GM12878 (cell line): ENCODE measurements at regions of chr17 and their contacts with region 1.

Region 1: GRCh38 chr17:50872710-50873424 is 6.7 kb upstream of the TOB1 start:
- DNase-seq: no peak
- ATAC-seq: peak; percentile 72
- H3K4me3 ChIP-seq: no peak overlapping the region
- H3K27ac ChIP-seq: no peak overlapping the region
- H3K4me1 ChIP-seq: peaks cover 13% of the 10 kb centered on the region
- H3K27me3 ChIP-seq: no peaks in the 10 kb centered on the region
- CTCF ChIP-seq: no peak
- EP300 ChIP-seq: no peak
- POLR2A ChIP-seq: no peak
- RAD21 ChIP-seq: no peak

Region 2: DNA sequence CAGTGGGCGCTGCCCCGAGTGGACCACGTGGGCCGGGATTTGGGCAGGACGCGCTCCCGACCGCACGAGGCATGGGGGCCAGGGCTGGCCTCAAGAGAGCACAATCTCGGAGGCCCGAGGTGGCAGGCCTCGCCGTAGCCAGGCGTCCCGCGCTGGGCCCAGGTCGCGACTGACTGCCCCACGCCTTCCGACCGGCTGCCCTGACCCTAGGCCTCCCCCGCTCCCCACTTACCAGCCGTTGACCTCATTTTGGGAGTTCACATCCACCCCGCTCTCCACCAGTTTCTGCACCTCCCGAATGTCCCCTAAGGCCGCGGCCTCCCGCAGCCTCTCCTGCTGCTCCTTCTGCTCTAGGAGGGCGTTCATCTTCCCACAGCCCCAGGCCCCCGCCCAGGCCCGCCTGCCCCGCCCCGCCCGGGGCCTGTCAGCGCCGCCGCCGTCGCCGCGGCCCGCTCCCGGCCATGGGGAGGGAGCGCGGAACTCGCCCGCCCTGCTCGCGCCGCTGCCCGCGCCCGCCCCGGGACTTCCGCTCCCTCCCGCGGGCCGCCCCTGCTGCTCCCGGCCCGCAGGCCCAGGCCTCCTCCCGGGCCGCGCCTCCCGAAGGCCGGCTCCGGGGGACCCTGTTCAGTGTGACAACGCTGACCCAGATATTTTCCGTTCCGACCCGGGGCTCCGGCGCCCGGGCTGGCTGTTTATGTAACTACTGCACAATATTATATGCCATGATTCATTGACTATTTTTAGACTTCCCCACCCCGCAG is 165.4 kb before region 1 on chr17 and contains the start of gene ANKRD40:
- CTCF ChIA-PET with region 1: no interaction called
- POLR2A ChIA-PET with region 1: interaction called, 10 read pairs
- RAD21 ChIA-PET with region 1: no interaction called
- SMC1A ChIA-PET with region 1: no interaction called
- in situ Hi-C with region 1: no loop called
- intact Hi-C with region 1: no loop called
- DNase-seq: peak; percentile 67
- ATAC-seq: peak; percentile 78
- H3K4me3 ChIP-seq: peak within 1 kb of the TSS; percentile 81
- H3K27ac ChIP-seq: peak within 1 kb of the TSS; percentile 86
- H3K4me1 ChIP-seq: peaks cover 9% of the 10 kb centered on the region
- H3K27me3 ChIP-seq: no peaks in the 10 kb centered on the region
- CTCF ChIP-seq: no peak
- EP300 ChIP-seq: 0 out of 4 replicates have a peak, but pooled peaks of 1 of the 2 experiments have one; percentile 9
- POLR2A ChIP-seq: peak; percentile 80
- RAD21 ChIP-seq: no peak
- polyA plus RNA-seq, gene ANKRD40: 6.7 to 6.9 TPM

Region 3: DNA sequence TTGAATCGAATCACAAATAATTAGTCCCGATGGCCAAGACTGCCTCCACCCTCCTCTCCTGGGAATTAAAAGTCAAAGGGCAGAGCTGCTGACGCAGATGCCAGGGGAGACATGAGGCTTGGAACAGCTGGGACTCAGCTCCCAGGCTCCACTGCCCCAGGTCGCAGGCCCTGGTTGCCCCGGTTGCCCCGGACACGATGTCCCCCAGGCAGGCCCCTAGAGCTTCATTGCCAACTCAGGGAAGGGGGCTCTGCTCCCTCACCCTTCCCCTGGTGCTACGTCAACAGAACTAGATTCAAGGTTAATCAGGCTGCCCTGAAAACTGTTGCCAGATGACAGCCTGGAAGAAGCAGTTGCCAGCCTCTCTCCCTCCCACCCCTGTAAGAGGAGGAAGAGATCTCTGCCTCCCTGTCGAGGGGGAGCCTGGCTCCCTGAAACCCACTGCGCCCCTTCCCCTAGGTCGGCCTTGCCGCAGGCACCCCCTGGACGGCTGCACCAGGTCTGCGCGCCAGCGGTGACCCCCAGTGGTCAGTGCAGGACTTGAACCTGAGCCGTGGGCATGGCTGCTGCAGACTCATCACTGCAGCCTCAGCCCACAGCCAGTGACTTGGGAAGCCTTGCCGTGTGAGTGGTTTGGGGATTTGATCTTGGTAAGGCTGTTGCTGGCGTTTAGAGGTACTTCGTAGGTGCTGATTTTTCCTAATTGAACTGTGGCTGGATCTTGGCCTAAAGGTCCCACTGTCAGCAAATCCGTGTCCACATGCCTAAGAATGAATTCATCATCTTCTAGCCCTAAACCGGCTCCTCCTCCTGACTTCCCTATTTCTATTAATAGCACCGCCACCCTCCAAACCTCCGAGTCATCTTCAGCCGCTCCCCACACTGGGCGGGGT is 77.4 kb after region 1 on chr17:
- CTCF ChIA-PET with region 1: interaction called, 11 read pairs
- POLR2A ChIA-PET with region 1: no interaction called
- RAD21 ChIA-PET with region 1: interaction called, 3 read pairs
- SMC1A ChIA-PET with region 1: no interaction called
- in situ Hi-C with region 1: no loop called
- intact Hi-C with region 1: no loop called
- DNase-seq: no peak
- ATAC-seq: peak; percentile 95
- H3K4me3 ChIP-seq: no peak overlapping the region
- H3K27ac ChIP-seq: no peak overlapping the region
- H3K4me1 ChIP-seq: peaks cover 20% of the 10 kb centered on the region
- H3K27me3 ChIP-seq: no peaks in the 10 kb centered on the region
- CTCF ChIP-seq: peak; percentile 66 to 76 (median 66)
- EP300 ChIP-seq: no peak
- POLR2A ChIP-seq: no peak
- RAD21 ChIP-seq: peak; percentile 88